Panc1 (cell line): ENCODE measurements at regions of chr19 and their contacts with region 1.

Region 1: GRCh38 chr19:34999498-35000341 is at the start of gene GRAMD1A:
- DNase-seq: peak; percentile 22
- ATAC-seq: peak; percentile 93
- H3K4me3 ChIP-seq: peak within 1 kb of the TSS; percentile 56 to 87
- H3K27ac ChIP-seq: peak within 1 kb of the TSS; percentile 91
- H3K4me1 ChIP-seq: peaks cover 17% of the 10 kb centered on the region
- H3K27me3 ChIP-seq: no peaks in the 10 kb centered on the region
- CTCF ChIP-seq: no peak
- total RNA-seq, gene GRAMD1A: 69.9 TPM

Region 2: DNA sequence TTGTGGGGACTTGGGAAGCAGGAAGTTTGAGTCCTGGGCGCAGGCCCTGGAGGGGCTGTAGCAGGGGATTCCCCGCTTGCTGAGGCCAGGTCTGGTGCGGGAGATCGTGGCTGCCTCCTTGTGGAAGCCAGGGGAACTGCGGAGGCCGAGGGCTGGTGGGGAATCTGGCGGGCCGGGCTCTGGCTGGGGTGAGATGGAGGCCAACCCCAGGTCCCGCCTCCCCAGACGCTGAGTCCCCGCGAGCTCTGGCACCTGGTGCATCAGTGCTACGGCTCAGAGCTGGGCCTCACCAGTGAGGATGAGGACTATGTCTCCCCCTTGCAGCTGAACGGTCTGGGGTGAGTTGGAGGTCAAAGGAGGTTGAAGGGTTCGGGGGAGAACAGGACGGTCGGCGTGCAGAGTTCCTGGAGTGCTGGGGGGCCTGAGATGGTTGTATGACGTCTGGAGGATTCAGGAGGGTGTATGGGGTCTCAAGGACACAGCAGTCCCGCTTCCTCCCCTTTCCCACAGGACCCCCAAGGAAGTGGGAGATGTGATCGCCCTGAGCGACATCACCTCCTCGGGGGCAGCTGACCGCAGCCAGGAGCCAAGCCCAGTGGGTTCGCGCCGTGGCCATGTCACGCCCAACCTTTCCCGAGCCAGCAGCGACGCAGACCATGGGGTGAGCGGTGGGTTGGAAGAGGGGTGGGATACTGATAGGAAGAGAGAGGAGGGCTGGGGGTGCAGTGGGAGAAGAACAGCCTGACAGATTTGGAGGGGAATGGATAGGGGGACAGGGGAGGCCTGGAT is 13.5 kb after region 1 on chr19:
- CTCF ChIA-PET with region 1: no interaction called
- POLR2A ChIA-PET with region 1: interaction called, 13 read pairs
- in situ Hi-C with region 1: no loop called
- intact Hi-C with region 1: no loop called
- DNase-seq: peak; percentile 32
- ATAC-seq: peak; percentile 81
- H3K4me3 ChIP-seq: no peak overlapping the region
- H3K27ac ChIP-seq: no peak overlapping the region
- H3K4me1 ChIP-seq: no peaks in the 10 kb centered on the region
- H3K27me3 ChIP-seq: no peaks in the 10 kb centered on the region
- CTCF ChIP-seq: peak; percentile 98

Region 3: DNA sequence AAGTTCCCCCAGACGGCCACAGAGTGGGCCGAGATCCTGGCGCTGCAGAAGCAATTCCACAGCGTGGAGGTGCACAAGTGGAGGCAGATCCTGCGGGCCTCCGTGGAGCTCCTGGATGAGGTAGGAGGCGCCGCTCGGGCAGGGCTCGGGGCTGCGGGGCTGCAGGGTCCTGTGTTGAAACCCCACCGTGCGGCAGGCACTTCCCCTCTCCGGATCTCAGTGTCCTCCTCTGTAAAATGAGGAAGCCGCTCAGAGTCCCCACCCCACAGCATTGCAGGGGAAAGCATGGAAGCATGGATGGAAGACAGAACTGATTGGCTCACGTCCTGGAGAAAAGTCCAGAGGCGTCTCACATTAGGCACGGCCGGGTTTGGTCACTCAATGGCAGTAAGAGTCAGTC is 23.7 kb after region 1 on chr19:
- CTCF ChIA-PET with region 1: no interaction called
- POLR2A ChIA-PET with region 1: no interaction called
- in situ Hi-C with region 1: no loop called
- intact Hi-C with region 1: no loop called
- DNase-seq: no peak
- ATAC-seq: no peak
- H3K4me3 ChIP-seq: no peak overlapping the region
- H3K27ac ChIP-seq: no peak overlapping the region
- H3K4me1 ChIP-seq: peaks cover 4% of the 10 kb centered on the region; the same call in 1 of the 2 replicates
- H3K27me3 ChIP-seq: no peaks in the 10 kb centered on the region
- CTCF ChIP-seq: no peak

Region 4: GRCh38 chr19:35066691-35067563 is 67.2 kb after region 1 on chr19:
- CTCF ChIA-PET with region 1: no interaction called
- POLR2A ChIA-PET with region 1: interaction called, 11 read pairs
- in situ Hi-C with region 1: no loop called
- intact Hi-C with region 1: no loop called
- DNase-seq: no peak
- ATAC-seq: peak; percentile 95
- H3K4me3 ChIP-seq: no peak overlapping the region
- H3K27ac ChIP-seq: no peak overlapping the region
- H3K4me1 ChIP-seq: no peaks in the 10 kb centered on the region
- H3K27me3 ChIP-seq: no peaks in the 10 kb centered on the region
- CTCF ChIP-seq: peak; percentile 97

Region 5: DNA sequence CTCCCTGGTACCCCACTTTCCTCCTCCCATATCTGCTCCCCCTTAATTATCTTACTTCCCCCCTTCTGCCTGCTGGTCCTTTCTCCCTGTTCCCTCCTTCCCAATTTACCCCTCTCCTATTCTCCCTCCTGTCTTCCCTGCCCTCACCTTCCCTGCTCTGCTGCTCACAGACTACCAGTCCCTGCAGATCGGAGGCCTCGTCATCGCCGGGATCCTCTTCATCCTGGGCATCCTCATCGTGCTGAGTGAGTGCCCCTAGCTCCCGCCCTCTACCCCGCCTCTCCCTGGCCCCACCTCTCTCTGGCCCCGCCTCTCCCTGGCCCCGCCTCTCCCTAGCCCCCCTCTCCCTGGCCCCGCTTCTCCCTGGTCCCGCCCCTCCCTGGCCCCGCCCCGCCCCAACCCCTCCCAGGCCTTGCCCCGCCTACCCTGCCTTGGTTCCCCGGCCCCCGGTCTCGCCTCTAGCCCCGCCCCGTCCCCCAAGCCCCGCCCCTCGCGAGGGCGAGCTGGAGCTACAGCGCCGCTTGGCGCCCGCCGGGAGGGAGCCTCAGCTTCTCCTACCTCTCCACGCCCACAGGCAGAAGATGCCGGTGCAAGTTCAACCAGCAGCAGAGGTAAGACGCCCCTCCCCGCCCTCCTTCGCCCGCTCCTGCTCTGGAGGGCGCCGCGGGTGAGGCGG is 141.4 kb after region 1 on chr19:
- CTCF ChIA-PET with region 1: interaction called, 14 read pairs
- POLR2A ChIA-PET with region 1: no interaction called
- in situ Hi-C with region 1: no loop called
- intact Hi-C with region 1: no loop called
- DNase-seq: no peak
- ATAC-seq: peak; percentile 78
- H3K4me3 ChIP-seq: peak overlapping the region; percentile 12 to 29; a peak in 3 of 4 replicates
- H3K27ac ChIP-seq: no peak overlapping the region
- H3K4me1 ChIP-seq: peaks cover 13% of the 10 kb centered on the region
- H3K27me3 ChIP-seq: peaks cover 19% of the 10 kb centered on the region
- CTCF ChIP-seq: peak; percentile 79

Region 6: DNA sequence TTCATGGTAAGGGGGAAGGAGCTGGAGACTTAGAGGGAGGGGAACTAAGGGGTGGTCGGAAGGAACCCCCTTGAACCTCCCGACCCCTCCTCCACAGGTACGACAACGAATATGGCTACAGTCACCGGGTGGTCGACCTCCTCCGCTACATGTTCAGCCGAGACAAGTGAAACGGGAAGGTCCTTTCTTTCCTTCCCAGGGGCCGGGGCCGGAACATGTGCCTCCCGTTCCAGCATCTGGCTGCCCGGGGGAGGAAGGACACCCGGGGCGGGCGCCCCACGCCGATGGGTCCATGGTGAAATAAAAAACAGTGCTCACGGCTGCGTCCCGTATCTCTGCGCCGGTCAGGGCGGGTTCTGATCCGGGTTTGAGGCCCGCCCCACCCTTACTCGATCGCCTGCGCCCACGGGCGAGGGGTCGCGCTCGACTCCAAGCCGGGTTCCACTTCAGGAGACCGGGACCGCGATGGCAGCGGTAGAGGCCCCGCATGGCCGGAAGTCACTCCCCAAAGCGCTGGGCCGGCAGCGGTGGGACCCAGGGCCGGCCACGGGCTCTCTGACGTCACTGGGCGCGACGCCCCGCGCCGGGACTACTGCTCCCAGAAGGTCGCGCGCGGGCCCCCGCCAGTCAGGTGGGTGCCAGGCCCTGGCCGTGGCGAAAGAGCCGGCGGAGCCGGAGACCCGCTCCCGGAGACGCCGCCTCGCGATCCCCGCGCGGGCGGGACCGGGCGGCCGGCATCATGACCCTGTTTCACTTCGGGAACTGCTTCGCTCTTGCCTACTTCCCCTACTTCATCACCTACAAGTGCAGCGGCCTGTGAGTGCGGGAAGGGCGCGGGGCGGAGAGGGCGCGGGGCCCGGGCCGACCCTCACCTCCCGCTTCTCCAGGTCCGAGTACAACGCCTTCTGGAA is 545.5 kb after region 1 on chr19 and contains the start of gene TMEM147:
- CTCF ChIA-PET with region 1: no interaction called
- POLR2A ChIA-PET with region 1: no interaction called
- in situ Hi-C with region 1: no loop called
- intact Hi-C with region 1: no loop called
- DNase-seq: peak; percentile 33
- ATAC-seq: peak; percentile 98
- H3K4me3 ChIP-seq: peak within 1 kb of the TSS; percentile 79 to 98
- H3K27ac ChIP-seq: peak within 1 kb of the TSS; percentile 97
- H3K4me1 ChIP-seq: peaks cover 12% of the 10 kb centered on the region
- H3K27me3 ChIP-seq: no peaks in the 10 kb centered on the region
- CTCF ChIP-seq: no peak
- total RNA-seq, gene TMEM147: 157 TPM